Naive thymus-derived CD4-positive, alpha-beta T cell (primary cell): ENCODE measurements at regions of chr7 and their contacts with region 1.

Region 1: GRCh38 chr7:127392566-127393367 is at the start of gene ZNF800:
- DNase-seq: peak in 8 of 9 donors; percentile 73 to 92 (median 84)
- ATAC-seq: peak; percentile 90
- H3K4me3 ChIP-seq: peak within 1 kb of the TSS; percentile 96
- H3K4me3 Mint-ChIP-seq: peak within 1 kb of the TSS; percentile 94 to 100 (median 98)
- H3K27ac ChIP-seq: peak within 1 kb of the TSS; percentile 91
- H3K27ac Mint-ChIP-seq: peak within 1 kb of the TSS; percentile 91 to 99 (median 97)
- H3K4me1 ChIP-seq: peaks cover 7 to 43% of the 10 kb centered on the region in 2 donors
- H3K4me1 Mint-ChIP-seq: peaks cover 41 to 62% (median 52%) of the 10 kb centered on the region in 7 donors
- H3K27me3 ChIP-seq: no peaks in the 10 kb centered on the region
- H3K27me3 Mint-ChIP-seq: peaks cover 0 to 10% (median 0%) of the 10 kb centered on the region in 5 donors
- total RNA-seq, gene ZNF800: 43.3 to 71.9 (median 61.4) TPM

Region 2: GRCh38 chr7:127253281-127254162 is 139.2 kb before region 1 on chr7:
- CTCF ChIA-PET with region 1: no interaction called
- POLR2A ChIA-PET with region 1: no interaction called
- intact Hi-C with region 1: loop called in 1 of 2 experiments (anchors 2 kb)
- DNase-seq: peak; percentile 13 to 64 (median 41)
- ATAC-seq: peak; percentile 84
- H3K4me3 ChIP-seq: peak overlapping the region; percentile 76
- H3K4me3 Mint-ChIP-seq: peak overlapping the region; percentile 76 to 93 (median 88)
- H3K27ac ChIP-seq: no peak overlapping the region
- H3K27ac Mint-ChIP-seq: no peak overlapping the region
- H3K4me1 ChIP-seq: peaks cover 12 to 16% of the 10 kb centered on the region in 2 donors
- H3K4me1 Mint-ChIP-seq: peaks cover 12 to 32% (median 25%) of the 10 kb centered on the region in 7 donors
- H3K27me3 ChIP-seq: peaks cover 3 to 27% of the 10 kb centered on the region in 2 donors
- H3K27me3 Mint-ChIP-seq: peaks cover 65 to 83% (median 73%) of the 10 kb centered on the region in 5 donors

Region 3: DNA sequence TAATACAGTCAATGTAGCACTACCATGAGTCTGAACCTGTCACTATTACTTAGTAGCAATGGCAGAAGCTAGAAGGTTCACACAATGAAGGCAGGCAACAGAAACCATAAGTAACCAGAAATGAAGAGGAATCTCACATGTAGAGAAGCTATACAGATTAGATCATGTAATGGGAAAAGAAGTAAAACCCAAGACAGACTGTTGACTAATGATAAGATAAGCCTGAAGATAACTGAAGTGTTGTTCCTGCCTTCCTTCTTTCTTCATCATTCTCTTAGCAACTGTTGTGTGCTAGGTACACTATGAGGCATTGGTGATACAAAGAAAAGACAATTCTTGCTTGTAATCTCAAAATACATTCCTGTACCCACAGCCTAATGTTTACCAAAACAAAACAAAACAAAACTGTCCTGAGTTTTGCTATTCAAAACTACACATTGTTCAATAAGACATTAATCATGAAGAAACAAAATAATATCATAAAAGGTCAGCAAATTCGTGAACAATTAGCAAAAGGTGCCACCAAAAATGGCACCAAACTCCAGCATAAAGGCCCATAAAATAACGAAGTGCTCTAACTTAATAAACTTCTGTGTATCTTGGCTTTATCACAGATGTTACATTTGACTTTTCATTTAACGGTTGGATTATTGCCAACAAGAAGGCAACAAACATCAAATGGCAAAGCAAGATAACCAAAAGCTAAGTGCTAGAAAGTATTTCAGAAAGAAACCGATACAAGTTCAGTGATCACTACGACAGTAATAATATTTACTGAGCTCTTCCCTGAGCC is 27.4 kb before region 1 on chr7:
- CTCF ChIA-PET with region 1: no interaction called
- POLR2A ChIA-PET with region 1: interaction called, 18 read pairs
- intact Hi-C with region 1: no loop called
- DNase-seq: no peak
- ATAC-seq: peak; percentile 44
- H3K4me3 ChIP-seq: no peak overlapping the region
- H3K4me3 Mint-ChIP-seq: no peak overlapping the region
- H3K27ac ChIP-seq: no peak overlapping the region
- H3K27ac Mint-ChIP-seq: no peak overlapping the region
- H3K4me1 ChIP-seq: no peaks in the 10 kb centered on the region
- H3K4me1 Mint-ChIP-seq: peaks cover 19 to 45% (median 30%) of the 10 kb centered on the region in 7 donors
- H3K27me3 ChIP-seq: no peaks in the 10 kb centered on the region
- H3K27me3 Mint-ChIP-seq: no peaks in the 10 kb centered on the region

Region 4: GRCh38 chr7:127404286-127405072 is 11.7 kb after region 1 on chr7:
- CTCF ChIA-PET with region 1: interaction called, 3 read pairs
- POLR2A ChIA-PET with region 1: interaction called, 91 read pairs
- intact Hi-C with region 1: loop called in 1 of 2 experiments (anchors 1 kb)
- DNase-seq: peak in 6 of 9 donors; percentile 29 to 48 (median 32)
- ATAC-seq: peak; percentile 76
- H3K4me3 ChIP-seq: no peak overlapping the region
- H3K4me3 Mint-ChIP-seq: peak overlapping the region in 9 of 10 donors; percentile 7 to 81 (median 60)
- H3K27ac ChIP-seq: peak overlapping the region; percentile 54
- H3K27ac Mint-ChIP-seq: peak overlapping the region; percentile 43 to 93 (median 83)
- H3K4me1 ChIP-seq: peaks cover 0 to 16% of the 10 kb centered on the region in 2 donors
- H3K4me1 Mint-ChIP-seq: peaks cover 8 to 44% (median 35%) of the 10 kb centered on the region in 7 donors
- H3K27me3 ChIP-seq: no peaks in the 10 kb centered on the region
- H3K27me3 Mint-ChIP-seq: peaks cover 0 to 34% (median 3%) of the 10 kb centered on the region in 5 donors

Region 5: GRCh38 chr7:127437852-127438251 is 45.1 kb after region 1 on chr7:
- CTCF ChIA-PET with region 1: interaction called, 3 read pairs
- POLR2A ChIA-PET with region 1: interaction called, 18 read pairs
- intact Hi-C with region 1: loop called in 1 of 2 experiments (anchors 5 kb)
- DNase-seq: no peak
- ATAC-seq: no peak
- H3K4me3 ChIP-seq: no peak overlapping the region
- H3K4me3 Mint-ChIP-seq: no peak overlapping the region
- H3K27ac ChIP-seq: no peak overlapping the region
- H3K27ac Mint-ChIP-seq: no peak overlapping the region
- H3K4me1 ChIP-seq: no peaks in the 10 kb centered on the region
- H3K4me1 Mint-ChIP-seq: no peaks in the 10 kb centered on the region
- H3K27me3 ChIP-seq: no peaks in the 10 kb centered on the region
- H3K27me3 Mint-ChIP-seq: peaks cover 0 to 43% (median 0%) of the 10 kb centered on the region in 5 donors

Region 6: DNA sequence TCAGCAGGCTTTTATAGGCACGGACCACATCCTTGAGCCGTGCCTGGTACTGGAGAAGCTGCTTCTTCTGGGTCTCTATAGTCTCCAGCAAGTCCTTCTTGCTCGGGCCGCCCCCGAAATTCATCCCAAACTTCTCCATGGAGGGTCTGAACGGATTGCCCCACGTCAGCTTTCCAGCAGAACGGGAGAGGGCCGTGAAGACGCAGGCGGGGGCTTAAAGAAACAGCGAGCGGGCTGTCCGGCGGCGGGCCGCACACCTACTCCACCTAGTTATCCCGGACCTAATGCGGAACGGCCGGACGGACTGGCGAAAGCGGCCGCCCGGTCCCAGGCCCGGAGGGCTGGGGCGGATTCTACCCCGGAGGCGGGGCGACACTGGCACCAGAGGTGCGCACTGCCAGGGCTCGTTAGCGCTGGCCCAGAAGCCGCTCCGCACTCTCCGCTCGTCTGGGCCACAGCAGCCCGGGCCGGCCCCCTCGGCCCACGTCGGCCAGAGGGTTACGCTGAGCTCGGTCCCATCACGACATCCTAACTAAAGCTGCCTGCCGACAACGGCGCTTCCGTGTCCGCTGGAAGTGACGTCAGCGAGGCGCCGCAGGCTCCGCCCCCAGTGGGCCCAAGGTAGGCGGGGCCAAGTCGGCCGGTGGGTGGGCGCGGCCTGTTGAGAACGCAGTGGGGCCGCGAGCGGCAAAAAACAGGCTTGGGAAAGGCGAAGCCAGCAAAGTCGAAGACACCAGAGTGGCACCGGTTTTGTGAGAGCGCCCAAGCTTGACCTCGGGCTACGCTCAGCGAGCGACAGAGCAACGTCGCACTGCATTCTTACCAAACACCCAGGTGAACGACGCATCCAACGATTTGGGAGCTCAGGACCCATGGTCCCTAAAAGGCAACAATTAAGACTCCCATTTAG is 192.5 kb after region 1 on chr7 and contains the start of gene GCC1:
- CTCF ChIA-PET with region 1: no interaction called
- POLR2A ChIA-PET with region 1: interaction called, 16 read pairs
- intact Hi-C with region 1: loop called (anchors 1 kb)
- DNase-seq: peak; percentile 87 to 98 (median 93)
- ATAC-seq: peak; percentile 87
- H3K4me3 ChIP-seq: peak within 1 kb of the TSS; percentile 87
- H3K4me3 Mint-ChIP-seq: peak within 1 kb of the TSS; percentile 86 to 98 (median 92)
- H3K27ac ChIP-seq: peak within 1 kb of the TSS; percentile 88
- H3K27ac Mint-ChIP-seq: peak within 1 kb of the TSS; percentile 77 to 97 (median 94)
- H3K4me1 ChIP-seq: peaks cover 47 to 55% of the 10 kb centered on the region in 2 donors
- H3K4me1 Mint-ChIP-seq: peaks cover 55 to 88% (median 78%) of the 10 kb centered on the region in 7 donors
- H3K27me3 ChIP-seq: no peaks in the 10 kb centered on the region
- H3K27me3 Mint-ChIP-seq: no peaks in the 10 kb centered on the region
- total RNA-seq, gene GCC1: 19.6 to 31.3 (median 23.7) TPM

Region 7: DNA sequence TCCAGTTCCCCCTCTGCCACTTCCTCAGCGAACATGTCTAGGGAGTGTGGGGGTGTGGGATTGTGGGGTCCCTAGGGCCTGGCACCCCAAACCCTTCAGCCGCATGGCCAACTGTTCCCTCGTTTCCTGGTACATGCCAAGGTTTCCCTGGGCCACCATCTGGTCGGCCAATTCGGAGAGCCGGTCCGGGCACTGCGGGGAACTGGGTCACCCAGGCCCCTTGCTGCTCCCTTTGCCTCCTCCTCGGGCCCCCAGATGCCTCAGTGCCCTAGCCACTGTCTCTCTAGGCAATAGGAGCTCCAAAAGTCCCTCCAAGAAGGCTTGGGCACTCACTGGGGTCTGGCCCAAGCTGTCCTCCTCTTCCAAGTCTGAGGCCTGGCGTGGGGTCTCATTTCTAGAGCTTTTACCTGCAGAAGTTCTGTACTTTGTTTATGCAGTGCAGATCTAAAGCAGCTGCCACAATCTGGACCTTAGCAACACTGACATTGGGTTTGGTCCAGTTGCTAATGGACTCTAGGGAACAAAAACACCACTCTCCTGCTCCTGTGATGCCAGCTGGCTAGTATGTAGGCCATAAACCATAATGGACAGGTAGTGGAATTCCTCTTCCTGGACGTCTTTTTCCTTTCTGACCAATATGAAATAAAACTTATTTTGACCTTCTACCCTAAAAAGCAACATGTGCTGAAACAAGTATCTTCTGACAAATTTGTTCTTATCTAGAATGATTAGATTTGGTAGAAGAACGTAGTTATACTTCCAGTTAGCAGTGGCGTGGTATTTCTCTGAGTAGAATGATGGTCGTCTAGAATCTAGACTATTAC is 465.5 kb after region 1 on chr7:
- CTCF ChIA-PET with region 1: no interaction called
- POLR2A ChIA-PET with region 1: no interaction called
- intact Hi-C with region 1: loop called in 1 of 2 experiments (anchors 10 kb)
- DNase-seq: no peak
- ATAC-seq: no peak
- H3K4me3 ChIP-seq: no peak overlapping the region
- H3K4me3 Mint-ChIP-seq: peak overlapping the region in 4 of 10 donors; percentile 7 to 42 (median 40)
- H3K27ac ChIP-seq: no peak overlapping the region
- H3K27ac Mint-ChIP-seq: peak overlapping the region in 1 of 9 donors; percentile 75
- H3K4me1 ChIP-seq: peaks cover 25 to 37% of the 10 kb centered on the region in 2 donors
- H3K4me1 Mint-ChIP-seq: peaks cover 22 to 59% (median 49%) of the 10 kb centered on the region in 7 donors
- H3K27me3 ChIP-seq: no peaks in the 10 kb centered on the region
- H3K27me3 Mint-ChIP-seq: peaks cover 5 to 40% (median 18%) of the 10 kb centered on the region in 5 donors